ENCODE measurements at regions of chr3 and their contacts with region 1.

Region 1: GRCh38 chr3:181326637-181327223 is 337.2 kb upstream of the DNAJC19 start:
- DNase-seq: no peak
- ATAC-seq: no peak
- H3K4me3 ChIP-seq: no peak overlapping the region
- H3K27ac ChIP-seq: no peak overlapping the region
- H3K4me1 ChIP-seq: no peaks in the 10 kb centered on the region
- H3K27me3 ChIP-seq: no peaks in the 10 kb centered on the region
- CTCF ChIP-seq: peak; percentile 57

Region 2: GRCh38 chr3:181213347-181213746 is 113.4 kb before region 1 on chr3:
- intact Hi-C with region 1: no loop called
- DNase-seq: no peak
- ATAC-seq: no peak
- H3K4me3 ChIP-seq: no peak overlapping the region
- H3K27ac ChIP-seq: no peak overlapping the region
- H3K4me1 ChIP-seq: no peaks in the 10 kb centered on the region
- H3K27me3 ChIP-seq: peaks cover 0 to 3% (median 0%) of the 10 kb centered on the region in 3 donors
- CTCF ChIP-seq: no peak

Region 3: GRCh38 chr3:181700168-181701087 is 373.7 kb after region 1 on chr3:
- intact Hi-C with region 1: loop called in 1 of 2 experiments (anchors 2 kb)
- DNase-seq: peak in 1 of 2 donors; percentile 44
- ATAC-seq: peak; percentile 77 to 88 (median 80)
- H3K4me3 ChIP-seq: peak overlapping the region; percentile 26
- H3K27ac ChIP-seq: no peak overlapping the region
- H3K4me1 ChIP-seq: peaks cover 6% of the 10 kb centered on the region
- H3K27me3 ChIP-seq: peaks cover 3 to 98% (median 30%) of the 10 kb centered on the region in 3 donors
- CTCF ChIP-seq: peak; percentile 87

Region 4: GRCh38 chr3:182683453-182683852 is 1356.7 kb after region 1 on chr3:
- intact Hi-C with region 1: loop called in 1 of 2 experiments (anchors 5 kb)
- DNase-seq: peak in 1 of 2 donors; percentile 24
- ATAC-seq: peak; percentile 74 to 94 (median 88)
- H3K4me3 ChIP-seq: peak overlapping the region; percentile 70
- H3K27ac ChIP-seq: no peak overlapping the region
- H3K4me1 ChIP-seq: peaks cover 3% of the 10 kb centered on the region
- H3K27me3 ChIP-seq: peaks cover 0 to 7% (median 0%) of the 10 kb centered on the region in 3 donors
- CTCF ChIP-seq: peak; percentile 90